Activated CD4-positive, alpha-beta T cell treated with anti-CD3 and anti-CD28 coated beads, Interleukin-2, amount 10 ng/mL, durations not matched to agents 24 days and 14 days (primary cell): ENCODE measurements at regions of chr11 and their contacts with region 1.

Region 1: DNA sequence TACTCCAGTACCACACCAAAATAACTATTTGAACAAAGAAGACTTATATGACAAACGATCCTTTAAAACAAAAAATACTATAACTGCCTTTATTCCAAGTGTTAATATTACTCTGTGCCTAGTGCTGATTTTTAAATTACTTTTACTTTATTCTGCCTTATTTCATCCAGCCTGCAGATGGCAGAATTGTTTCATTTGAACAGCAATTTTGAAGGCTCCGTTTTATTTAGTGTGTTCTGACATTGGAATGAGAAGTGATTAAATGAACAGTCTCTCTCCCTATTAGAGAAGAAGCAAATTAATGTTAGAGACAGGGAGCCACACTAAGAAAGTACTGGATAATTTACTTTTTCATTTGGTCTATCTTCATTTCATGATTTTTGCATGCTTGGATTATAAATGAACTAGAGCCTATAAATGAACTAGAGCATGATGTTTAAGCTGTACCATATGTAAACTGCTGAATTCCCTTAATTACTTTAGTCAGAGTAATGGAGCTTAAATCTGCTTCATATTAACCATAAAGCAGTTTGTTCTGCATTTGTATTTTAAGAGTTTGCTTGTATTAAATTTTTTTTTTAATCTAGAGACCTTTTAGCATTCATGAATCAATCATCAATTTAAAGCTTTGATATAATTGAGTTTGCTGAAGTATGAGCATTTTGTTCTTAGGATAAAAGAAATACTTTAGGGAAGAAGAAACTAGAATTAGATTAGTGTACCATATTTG is 9.8 kb downstream of the PDHX start:
- DNase-seq: peak; percentile 77
- H3K4me3 Mint-ChIP-seq: no peak overlapping the region
- H3K27ac Mint-ChIP-seq: no peak overlapping the region
- H3K4me1 Mint-ChIP-seq: peaks cover 11% of the 10 kb centered on the region
- H3K27me3 Mint-ChIP-seq: no peaks in the 10 kb centered on the region

Region 2: DNA sequence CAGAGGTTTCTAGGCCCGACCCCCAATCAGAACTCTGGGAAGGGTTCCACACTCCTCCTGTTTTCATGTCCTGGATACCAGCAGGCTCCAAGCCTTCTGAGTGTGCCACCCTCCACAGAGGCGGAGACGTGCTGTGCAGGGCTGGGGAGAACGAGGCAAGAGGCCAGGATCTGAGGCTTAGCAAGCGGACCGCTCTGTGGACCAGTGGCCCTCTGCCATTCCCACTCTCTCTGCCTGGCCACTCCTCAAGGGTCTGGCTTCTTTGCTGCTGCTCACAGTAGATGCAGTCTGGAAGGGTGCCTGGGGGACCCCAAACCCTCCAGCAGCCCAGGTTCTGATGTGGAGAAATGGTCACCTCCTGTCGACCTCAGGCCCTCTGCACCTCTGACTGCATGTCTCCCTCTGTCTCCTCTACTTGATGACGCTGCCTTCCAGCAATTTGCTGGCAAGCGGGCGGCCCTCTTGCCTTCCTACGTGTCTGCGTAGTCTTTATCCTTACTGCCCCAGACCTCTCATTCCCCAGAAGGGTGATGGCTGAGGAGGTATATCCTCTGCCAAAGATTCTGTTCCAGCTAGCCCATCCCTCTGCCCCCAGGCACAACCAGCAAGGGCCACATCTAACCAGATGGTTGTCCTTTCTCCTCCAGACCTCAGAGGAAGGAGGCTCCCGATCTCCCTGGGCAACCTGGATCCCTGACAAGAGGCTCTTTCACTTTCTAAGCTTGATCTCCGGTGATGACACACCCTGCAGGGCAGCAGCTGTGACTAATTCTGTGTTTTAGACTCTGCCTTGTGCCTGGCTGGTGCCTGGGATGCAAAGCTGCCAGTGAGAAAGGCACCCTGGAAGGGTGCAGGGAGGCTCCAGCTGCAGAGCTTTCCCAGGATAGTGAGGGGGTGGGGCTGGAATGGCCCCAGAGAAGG is 733.5 kb before region 1 on chr11:
- intact Hi-C with region 1: no loop called
- DNase-seq: peak; percentile 69
- H3K4me3 Mint-ChIP-seq: no peak overlapping the region
- H3K27ac Mint-ChIP-seq: no peak overlapping the region
- H3K4me1 Mint-ChIP-seq: peaks cover 17% of the 10 kb centered on the region
- H3K27me3 Mint-ChIP-seq: peaks cover 8% of the 10 kb centered on the region

Region 3: GRCh38 chr11:34819740-34820482 is 106.4 kb before region 1 on chr11:
- intact Hi-C with region 1: no loop called
- DNase-seq: no peak
- H3K4me3 Mint-ChIP-seq: no peak overlapping the region
- H3K27ac Mint-ChIP-seq: no peak overlapping the region
- H3K4me1 Mint-ChIP-seq: peaks cover 11% of the 10 kb centered on the region
- H3K27me3 Mint-ChIP-seq: peaks cover 19% of the 10 kb centered on the region

Region 4: DNA sequence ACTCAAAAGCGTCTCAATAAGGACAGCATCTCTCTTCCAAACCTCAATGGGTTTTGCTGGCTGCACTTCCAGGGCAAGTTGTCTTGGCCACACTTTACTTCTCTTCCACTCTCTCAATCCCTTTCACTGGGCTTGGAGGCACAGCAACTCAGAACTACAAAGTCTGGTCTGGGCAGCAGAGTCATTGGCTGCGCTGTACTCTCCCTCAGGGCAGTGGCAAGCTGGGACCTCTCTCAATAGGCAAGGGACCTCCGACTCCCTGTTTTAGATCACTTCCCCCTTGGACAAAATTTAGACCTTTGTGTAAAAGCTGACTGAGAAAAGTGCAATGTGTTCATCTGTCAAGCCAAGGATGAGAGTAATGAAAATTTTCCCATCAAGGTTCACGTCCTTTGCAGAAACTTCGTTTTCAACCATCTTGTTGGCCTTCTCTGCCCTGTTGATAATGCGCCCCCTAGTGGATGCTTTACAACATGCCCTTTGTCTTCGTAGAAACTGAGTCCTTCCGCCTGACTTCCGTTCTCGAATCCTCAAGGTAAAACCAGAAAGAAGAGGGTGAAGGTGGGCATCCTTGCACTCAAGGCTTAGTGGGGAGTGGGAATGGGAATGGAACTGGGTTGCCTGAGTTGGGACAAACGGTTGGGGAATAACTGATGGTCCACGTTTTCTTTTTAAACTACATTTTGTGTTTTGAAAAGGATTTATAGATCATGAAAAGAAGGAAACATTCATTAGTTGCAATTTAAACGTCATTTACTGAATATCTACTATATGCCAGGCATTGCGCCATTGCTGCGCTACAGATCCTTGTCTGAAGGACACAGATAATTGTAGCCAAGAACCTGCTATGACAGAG is 311.8 kb after region 1 on chr11:
- intact Hi-C with region 1: loop called (anchors 5 kb)
- DNase-seq: peak; percentile 88
- H3K4me3 Mint-ChIP-seq: peak overlapping the region; percentile 33
- H3K27ac Mint-ChIP-seq: no peak overlapping the region
- H3K4me1 Mint-ChIP-seq: peaks cover 69% of the 10 kb centered on the region
- H3K27me3 Mint-ChIP-seq: peaks cover 7% of the 10 kb centered on the region

Region 5: DNA sequence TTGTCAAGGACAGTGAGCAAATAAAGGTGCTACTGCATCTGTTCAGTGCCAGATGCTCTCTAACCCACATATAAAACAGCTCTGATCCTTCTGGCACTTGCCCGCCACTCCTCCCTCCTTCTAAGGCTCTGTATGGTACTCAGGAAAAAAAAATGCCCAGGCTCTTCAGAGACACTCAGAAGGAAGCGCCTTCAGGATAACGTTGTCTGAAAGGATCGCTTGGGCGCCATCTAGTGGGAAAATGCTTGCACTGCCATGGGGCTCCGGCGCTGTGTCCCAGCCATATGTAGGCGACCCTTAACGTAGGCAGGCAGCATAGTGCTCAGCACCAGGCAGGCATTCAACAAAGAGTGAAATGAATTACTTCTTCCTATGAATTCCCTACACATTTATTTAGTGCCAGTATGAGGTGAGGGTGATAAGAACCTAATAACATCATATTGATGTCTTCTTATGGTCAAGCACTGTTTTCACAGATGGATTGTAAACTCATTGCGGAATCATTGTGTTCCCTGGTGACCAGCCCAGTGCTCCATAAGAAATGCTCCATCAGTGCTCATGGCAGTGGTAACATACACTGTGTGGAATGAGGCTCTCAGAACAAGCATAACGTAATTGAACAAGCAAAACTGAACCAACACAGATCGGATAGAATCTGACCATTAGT is 559.5 kb after region 1 on chr11:
- intact Hi-C with region 1: loop called (anchors 1 kb)
- DNase-seq: peak; percentile 90
- H3K4me3 Mint-ChIP-seq: no peak overlapping the region
- H3K27ac Mint-ChIP-seq: no peak overlapping the region
- H3K4me1 Mint-ChIP-seq: no peaks in the 10 kb centered on the region
- H3K27me3 Mint-ChIP-seq: peaks cover 30% of the 10 kb centered on the region